ENCODE measurements at regions of chr22 and their contacts with region 1.

Region 1: GRCh38 chr22:39332441-39333064 is 13.1 kb upstream of the RPL3 start:
- DNase-seq: no peak
- ATAC-seq: no peak
- H3K4me3 ChIP-seq: no peak overlapping the region
- H3K27ac ChIP-seq: no peak overlapping the region
- H3K4me1 ChIP-seq: no peaks in the 10 kb centered on the region
- CTCF ChIP-seq: no peak
- EP300 ChIP-seq: no peak
- POLR2A ChIP-seq: no peak
- RAD21 ChIP-seq: no peak

Region 2: DNA sequence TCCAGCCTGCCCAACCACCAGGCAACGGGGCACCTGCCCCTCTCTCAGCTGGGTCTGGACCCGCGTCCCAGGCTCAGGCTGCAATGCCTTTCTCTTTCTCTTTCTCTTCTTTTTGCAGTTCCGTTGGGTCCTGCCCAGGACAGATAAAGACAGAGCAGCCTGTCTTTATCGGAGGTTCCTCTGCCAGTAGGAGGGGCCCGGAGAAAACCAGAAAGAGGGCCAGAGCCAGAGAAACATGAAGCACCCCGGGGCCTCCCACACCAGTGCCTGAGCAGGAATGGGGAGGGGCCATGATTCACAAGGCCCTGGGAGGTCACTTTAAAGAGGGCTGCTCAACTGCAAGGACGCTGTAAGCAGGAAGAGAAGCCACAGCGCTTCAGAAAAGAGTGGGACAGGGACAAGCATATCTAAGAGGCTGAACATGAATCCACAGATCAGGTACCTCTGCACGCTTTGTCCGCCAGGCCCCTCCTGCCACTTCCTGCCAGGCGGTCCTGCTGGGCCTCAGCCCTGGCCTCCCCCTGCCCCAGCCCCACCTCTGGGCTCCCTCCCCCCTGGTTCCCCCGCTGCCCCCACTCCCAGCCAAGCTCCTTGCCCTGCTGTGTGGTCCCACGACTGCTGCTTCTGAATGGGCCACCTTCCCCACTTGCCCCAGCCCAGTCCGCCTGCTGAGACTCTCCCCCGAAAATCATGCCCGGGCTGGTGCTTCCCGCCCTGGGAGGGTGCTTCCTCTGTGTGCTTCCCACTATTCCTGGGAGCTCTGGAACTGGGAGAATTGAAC is 318.4 kb before region 1 on chr22 and contains the start of gene APOBEC3C:
- CTCF ChIA-PET with region 1: no interaction called
- POLR2A ChIA-PET with region 1: no interaction called
- DNase-seq: peak; percentile 58 to 80
- ATAC-seq: peak; percentile 95 to 98
- H3K4me3 ChIP-seq: peak within 1 kb of the TSS; percentile 66
- H3K27ac ChIP-seq: peak within 1 kb of the TSS; percentile 85 to 98
- H3K4me1 ChIP-seq: peaks cover 13% of the 10 kb centered on the region
- CTCF ChIP-seq: no peak
- EP300 ChIP-seq: no peak
- POLR2A ChIP-seq: peak; percentile 51
- RAD21 ChIP-seq: 0 out of 5 replicates have a peak, but pooled peaks of 1 of the 2 experiments have one; percentile 14
- polyA plus RNA-seq, gene APOBEC3C: 15.1 and 22.2 TPM in 2 replicates

Region 3: DNA sequence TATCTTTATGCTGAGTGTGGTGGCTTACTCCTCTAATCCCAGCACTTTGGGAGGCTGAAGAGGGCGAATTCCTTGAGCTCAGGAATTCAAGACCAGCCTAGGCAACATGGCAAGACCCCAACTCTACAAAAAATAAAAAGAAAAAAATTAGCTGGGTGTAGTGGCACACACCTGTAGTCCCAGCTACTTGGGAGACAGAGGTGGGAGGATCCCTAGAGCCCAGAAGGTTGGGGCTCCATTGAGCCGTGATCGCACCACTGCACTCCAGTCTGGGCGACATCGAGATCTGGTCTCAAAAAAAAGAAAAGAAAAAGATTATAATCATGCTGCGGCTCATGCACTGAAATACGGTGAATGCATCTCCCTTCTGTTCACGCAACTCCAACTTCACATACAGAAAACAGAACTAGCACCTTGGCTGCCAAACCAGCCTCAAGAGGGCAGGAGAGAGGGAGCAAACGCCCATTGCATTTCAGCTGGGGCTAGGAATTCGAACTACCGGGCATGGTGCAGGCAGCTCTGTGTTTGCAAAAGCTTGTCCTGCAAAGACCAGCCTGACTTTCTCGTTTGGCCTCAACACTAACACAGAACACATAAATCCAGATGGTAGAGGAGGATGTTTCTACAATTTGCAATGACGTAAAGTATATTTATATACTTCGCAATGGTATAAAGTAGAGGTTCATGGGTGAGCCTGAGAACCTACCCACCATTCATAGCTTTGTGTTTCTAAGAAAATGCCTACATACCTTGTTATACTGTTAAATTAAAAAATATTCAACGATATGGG is 10.9 kb after region 1 on chr22:
- CTCF ChIA-PET with region 1: interaction called, 18 read pairs
- POLR2A ChIA-PET with region 1: no interaction called
- DNase-seq: peak; percentile 61 to 65
- ATAC-seq: peak; percentile 96 to 98
- H3K4me3 ChIP-seq: no peak overlapping the region
- H3K27ac ChIP-seq: no peak overlapping the region
- H3K4me1 ChIP-seq: peaks cover 5% of the 10 kb centered on the region; the same call in 1 of the 3 replicates
- CTCF ChIP-seq: peak; percentile 50
- EP300 ChIP-seq: no peak
- POLR2A ChIP-seq: no peak
- RAD21 ChIP-seq: peak; percentile 26 to 43; a peak in 3 of 5 replicates

Region 4: GRCh38 chr22:39356464-39356863 is 23.9 kb after region 1 on chr22:
- CTCF ChIA-PET with region 1: no interaction called
- POLR2A ChIA-PET with region 1: no interaction called
- DNase-seq: no peak
- ATAC-seq: no peak
- H3K4me3 ChIP-seq: no peak overlapping the region
- H3K27ac ChIP-seq: no peak overlapping the region
- H3K4me1 ChIP-seq: no peaks in the 10 kb centered on the region
- CTCF ChIP-seq: no peak
- EP300 ChIP-seq: no peak
- POLR2A ChIP-seq: no peak
- RAD21 ChIP-seq: no peak

Measured in A549 (cell line).